GM13976 (cell line): ENCODE measurements at regions of chr16 and their contacts with region 1.

Region 1: DNA sequence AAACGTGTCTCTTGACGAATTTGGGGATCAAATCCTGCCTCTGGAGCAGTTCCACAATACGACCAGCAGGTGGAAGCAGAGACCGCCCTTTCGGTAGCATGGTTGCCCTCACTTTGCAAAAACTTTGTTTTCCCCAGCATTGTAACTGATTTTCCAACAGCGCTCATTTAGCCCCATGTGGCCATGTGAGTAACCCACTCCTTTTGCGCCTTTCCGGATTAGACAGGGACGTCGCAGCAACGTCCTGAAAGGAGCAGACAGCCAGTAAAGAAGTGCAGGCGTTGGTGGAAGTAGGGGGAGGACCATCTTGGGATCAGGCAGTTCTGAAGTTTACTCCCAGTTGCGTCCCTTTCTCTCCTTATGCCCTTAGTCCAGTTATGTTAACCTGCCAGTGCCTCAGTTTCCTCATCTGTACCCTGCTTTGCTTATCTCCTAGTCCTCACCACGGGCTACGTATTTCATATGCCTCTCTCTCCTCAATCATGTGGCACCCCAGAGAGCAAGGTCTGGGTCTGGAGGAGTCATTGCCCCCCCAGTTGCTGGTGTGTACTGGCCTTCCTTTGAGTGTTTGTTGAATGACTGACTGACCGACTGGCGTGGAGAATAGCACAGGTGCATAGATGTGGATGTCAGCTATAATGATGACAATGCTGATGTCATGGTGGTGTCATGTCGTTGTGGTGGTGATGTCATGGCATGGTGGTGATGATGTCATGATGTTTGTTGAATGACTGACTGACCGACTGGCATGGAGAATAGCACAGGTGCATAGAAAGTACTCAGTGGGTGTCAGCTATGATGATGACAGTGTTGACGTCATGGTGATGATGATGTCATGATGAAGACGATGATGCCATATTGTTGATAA is 22.3 kb downstream of the TMEM114 start:
- DNase-seq: peak; percentile 79
- CTCF ChIP-seq: peak; percentile 89

Region 2: DNA sequence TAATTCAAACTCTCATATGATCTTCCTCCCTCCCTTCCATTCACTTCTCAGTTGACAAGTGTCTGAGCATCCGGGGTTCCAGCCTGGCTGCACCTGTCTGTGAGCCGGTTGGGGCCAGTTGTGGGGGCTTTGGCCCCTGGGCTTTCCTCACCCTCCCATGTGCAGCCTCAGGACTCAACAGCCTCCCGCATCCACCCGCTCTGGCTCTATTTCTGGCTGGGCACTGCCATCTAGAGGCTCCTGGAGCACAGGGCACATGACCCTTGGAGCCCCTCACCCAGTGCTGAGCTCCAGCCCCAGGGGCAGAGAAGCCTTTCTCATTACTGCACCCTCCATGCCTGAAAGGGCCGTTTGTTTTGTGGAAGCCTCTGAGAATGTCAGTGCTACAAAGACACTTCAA is 566.8 kb after region 1 on chr16:
- in situ Hi-C with region 1: loop called (anchors 25 kb)
- DNase-seq: peak; percentile 79
- CTCF ChIP-seq: peak; percentile 75